ENCODE measurements at regions of chr11 and their contacts with region 1.

Region 1: GRCh38 chr11:65134386-65135253 is at the start of gene SYVN1:
- DNase-seq: peak; percentile 96 to 99
- ATAC-seq: peak; percentile 95 to 97
- H3K4me3 ChIP-seq: peak within 1 kb of the TSS; percentile 84 to 99 (median 92)
- H3K27ac ChIP-seq: peak within 1 kb of the TSS; percentile 87 to 99 (median 98)
- H3K4me1 ChIP-seq: peaks cover 27 to 29% of the 10 kb centered on the region in 2 donors
- H3K27me3 ChIP-seq: no peaks in the 10 kb centered on the region
- CTCF ChIP-seq: peak in 1 of 5 experiments; percentile 24
- POLR2A ChIP-seq: peak; percentile 97 to 98
- total RNA-seq, gene SYVN1: 24.6 to 77.5 (median 37.3) TPM

Region 2: GRCh38 chr11:65150509-65151271 is 16.1 kb after region 1 on chr11:
- in situ Hi-C with region 1: no loop called
- intact Hi-C with region 1: loop called (anchors 1 kb)
- DNase-seq: peak; percentile 94 to 99
- ATAC-seq: peak; percentile 95 to 98
- H3K4me3 ChIP-seq: no peak overlapping the region
- H3K27ac ChIP-seq: peak overlapping the region; percentile 86 to 91 (median 88)
- H3K4me1 ChIP-seq: peaks cover 13 to 21% of the 10 kb centered on the region in 2 donors
- H3K27me3 ChIP-seq: no peaks in the 10 kb centered on the region
- CTCF ChIP-seq: peak in 1 of 5 experiments; percentile 2
- POLR2A ChIP-seq: peak in 1 of 2 donors; percentile 35

Measured in gastrocnemius medialis (tissue), 4 donors.